Activated naive CD4-positive, alpha-beta T cell treated with anti-CD3 and anti-CD28 coated beads for 36 hours (primary cell): ENCODE measurements at regions of chr12 and their contacts with region 1.

Region 1: GRCh38 chr12:110600254-110600653 is 13.7 kb upstream of the TCTN1 start:
- DNase-seq: no peak
- H3K4me3 Mint-ChIP-seq: no peak overlapping the region
- H3K27ac Mint-ChIP-seq: no peak overlapping the region
- H3K4me1 Mint-ChIP-seq: peaks cover 6% of the 10 kb centered on the region
- H3K27me3 Mint-ChIP-seq: no peaks in the 10 kb centered on the region

Region 2: DNA sequence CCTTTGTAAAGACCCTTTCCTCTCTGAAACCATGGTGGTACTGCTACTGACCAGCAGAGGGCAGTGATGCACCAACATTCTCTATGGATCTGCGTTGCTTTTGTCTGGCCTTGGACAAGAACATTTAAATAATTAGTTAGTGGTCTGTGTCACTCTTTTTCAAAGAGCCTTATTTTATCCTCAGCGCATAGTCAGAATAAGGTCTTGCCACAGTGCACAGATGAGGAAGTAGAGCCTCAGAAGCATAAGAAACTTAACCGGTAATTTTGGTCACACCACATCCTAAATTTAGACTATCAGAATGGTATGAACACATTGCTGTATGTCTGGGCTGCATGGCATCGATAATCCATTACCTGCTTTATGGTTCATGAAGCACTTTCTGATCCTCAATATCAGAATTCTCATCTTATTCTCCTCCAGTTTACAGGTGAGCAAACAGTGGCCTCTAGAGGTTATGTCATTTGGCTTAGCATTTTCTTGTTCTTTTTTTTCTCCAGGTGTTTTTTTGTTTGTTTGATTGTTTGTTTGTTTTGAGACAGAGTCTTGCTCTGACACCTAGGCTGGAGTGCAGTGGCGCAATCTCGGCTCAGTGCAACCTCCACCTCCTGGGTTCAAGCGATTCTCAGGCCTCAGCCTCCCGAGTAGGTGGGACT is 499.8 kb before region 1 on chr12:
- CTCF ChIA-PET with region 1: interaction called, 4 read pairs
- intact Hi-C with region 1: loop called (anchors 2 kb)
- DNase-seq: peak; percentile 77
- H3K4me3 Mint-ChIP-seq: no peak overlapping the region
- H3K27ac Mint-ChIP-seq: no peak overlapping the region
- H3K4me1 Mint-ChIP-seq: peaks cover 6% of the 10 kb centered on the region
- H3K27me3 Mint-ChIP-seq: no peaks in the 10 kb centered on the region

Region 3: GRCh38 chr12:110449799-110450497 is 150.3 kb before region 1 on chr12 and contains the start of gene ARPC3:
- CTCF ChIA-PET with region 1: interaction called, 50 read pairs
- intact Hi-C with region 1: loop called (anchors 1 kb)
- DNase-seq: peak; percentile 98
- H3K4me3 Mint-ChIP-seq: peak within 1 kb of the TSS; percentile 100
- H3K27ac Mint-ChIP-seq: peak within 1 kb of the TSS; percentile 100
- H3K4me1 Mint-ChIP-seq: peaks cover 38% of the 10 kb centered on the region
- H3K27me3 Mint-ChIP-seq: no peaks in the 10 kb centered on the region
- total RNA-seq, gene ARPC3: 279 to 311 TPM

Region 4: DNA sequence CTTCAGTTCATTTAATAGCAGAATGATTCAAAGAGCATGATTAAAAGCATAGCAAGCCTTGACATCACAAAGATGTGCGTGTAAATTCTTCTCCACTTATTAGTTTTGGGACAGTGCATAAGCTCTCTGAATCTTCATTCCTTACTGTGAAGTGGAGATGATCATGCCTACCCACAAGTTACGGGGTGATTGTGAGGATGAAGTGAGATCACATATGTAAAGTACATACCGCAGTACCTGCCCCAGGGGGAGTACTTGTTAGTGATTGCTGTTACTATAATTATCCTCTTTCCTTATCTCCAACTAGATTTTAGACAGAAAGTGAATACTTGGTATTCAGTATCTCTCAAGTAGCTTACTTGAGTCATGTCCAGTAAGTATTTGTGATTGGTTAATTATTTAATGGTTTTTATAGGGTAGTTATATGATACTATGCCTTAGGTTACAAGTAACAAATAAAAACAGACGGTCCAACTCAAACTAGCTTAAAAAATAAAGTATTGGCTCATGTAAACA is 92.1 kb before region 1 on chr12:
- CTCF ChIA-PET with region 1: interaction called, 199 read pairs
- intact Hi-C with region 1: loop called (anchors 1 kb)
- DNase-seq: no peak
- H3K4me3 Mint-ChIP-seq: no peak overlapping the region
- H3K27ac Mint-ChIP-seq: no peak overlapping the region
- H3K4me1 Mint-ChIP-seq: no peaks in the 10 kb centered on the region
- H3K27me3 Mint-ChIP-seq: no peaks in the 10 kb centered on the region

Region 5: DNA sequence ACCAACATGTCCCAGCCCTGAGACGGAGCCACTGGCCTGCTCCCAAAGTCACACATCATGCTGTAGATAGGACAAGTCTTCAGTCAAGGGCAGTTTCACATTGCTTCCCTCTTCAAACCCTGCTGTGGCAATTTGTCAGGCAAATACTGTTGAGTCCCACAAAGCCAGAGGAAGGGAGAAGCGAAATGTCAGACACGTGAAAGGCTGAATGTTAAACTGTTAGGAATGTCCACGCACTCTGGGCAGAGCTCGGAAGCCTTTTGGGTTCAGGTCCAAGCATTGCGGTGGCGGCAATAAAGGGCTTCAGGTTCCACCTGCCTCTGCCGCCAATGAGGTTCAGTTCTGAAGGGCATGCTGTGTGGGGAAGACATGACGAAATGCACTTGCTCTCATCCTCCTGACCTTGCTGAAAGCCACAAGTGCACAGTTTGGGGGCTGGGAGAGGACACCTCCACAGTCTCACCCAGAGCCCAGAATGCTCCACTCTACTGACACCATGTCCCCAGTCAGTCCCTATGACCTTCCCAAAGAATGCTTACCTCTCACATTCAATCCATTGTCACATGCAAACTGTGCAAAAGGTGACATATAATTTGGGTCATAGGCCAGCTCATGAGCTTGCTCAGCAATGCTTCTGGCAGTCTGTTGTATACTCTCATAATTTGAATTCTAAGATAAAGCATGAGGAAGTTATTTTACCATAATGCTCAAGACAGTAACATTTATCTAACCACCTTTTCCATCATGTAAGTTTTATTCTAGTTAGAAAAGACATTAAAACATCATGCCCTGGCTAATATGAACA is 62.4 kb before region 1 on chr12:
- CTCF ChIA-PET with region 1: interaction called, 82 read pairs
- intact Hi-C with region 1: no loop called
- DNase-seq: no peak
- H3K4me3 Mint-ChIP-seq: no peak overlapping the region
- H3K27ac Mint-ChIP-seq: peak overlapping the region; percentile 15
- H3K4me1 Mint-ChIP-seq: peaks cover 29% of the 10 kb centered on the region
- H3K27me3 Mint-ChIP-seq: no peaks in the 10 kb centered on the region

Region 6: DNA sequence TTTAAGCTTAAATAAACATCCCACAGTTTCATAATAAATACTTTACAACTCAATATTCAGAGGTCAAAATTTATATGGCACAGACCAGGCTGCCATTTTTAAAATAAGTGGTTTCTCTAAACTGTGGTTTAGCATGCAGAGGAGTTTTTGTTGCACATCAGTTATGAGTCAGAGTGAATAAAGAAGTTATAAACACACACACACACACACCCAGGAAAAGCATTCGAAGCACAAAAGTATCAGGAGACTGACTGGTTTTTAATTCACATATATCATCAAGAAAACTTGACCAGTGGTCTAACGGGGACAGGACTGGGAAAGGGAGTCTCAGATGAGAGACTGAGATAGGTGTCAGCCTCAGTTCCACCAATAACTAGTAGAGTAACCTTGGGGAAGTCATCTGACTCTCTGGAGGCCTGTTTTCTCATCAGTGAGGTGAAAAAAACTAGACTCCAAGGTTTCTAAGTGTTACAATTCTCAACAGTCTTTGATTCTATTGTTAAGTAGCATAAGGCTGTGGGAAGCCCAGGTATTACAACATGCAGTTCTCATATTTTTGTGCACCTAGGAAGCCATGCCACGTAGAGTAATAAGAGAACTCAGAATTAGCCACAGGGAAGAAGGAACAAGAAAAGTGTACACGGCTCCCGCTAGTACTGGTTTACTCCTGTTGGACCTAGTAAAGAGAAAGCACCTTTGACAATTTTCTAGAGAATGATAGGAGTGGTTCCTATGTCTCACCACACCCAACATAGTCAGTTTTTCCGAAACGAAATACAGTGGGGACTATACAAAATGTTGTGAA is 22.3 kb before region 1 on chr12:
- CTCF ChIA-PET with region 1: interaction called, 20 read pairs
- intact Hi-C with region 1: no loop called
- DNase-seq: peak; percentile 72
- H3K4me3 Mint-ChIP-seq: peak overlapping the region; percentile 58
- H3K27ac Mint-ChIP-seq: peak overlapping the region; percentile 98
- H3K4me1 Mint-ChIP-seq: peaks cover 75% of the 10 kb centered on the region
- H3K27me3 Mint-ChIP-seq: no peaks in the 10 kb centered on the region

Region 7: GRCh38 chr12:110698171-110698902 is 98.1 kb after region 1 on chr12:
- CTCF ChIA-PET with region 1: interaction called, 5 read pairs
- intact Hi-C with region 1: loop called (anchors 1 kb)
- DNase-seq: peak; percentile 90
- H3K4me3 Mint-ChIP-seq: no peak overlapping the region
- H3K27ac Mint-ChIP-seq: peak overlapping the region; percentile 57
- H3K4me1 Mint-ChIP-seq: peaks cover 17% of the 10 kb centered on the region
- H3K27me3 Mint-ChIP-seq: no peaks in the 10 kb centered on the region

Region 8: DNA sequence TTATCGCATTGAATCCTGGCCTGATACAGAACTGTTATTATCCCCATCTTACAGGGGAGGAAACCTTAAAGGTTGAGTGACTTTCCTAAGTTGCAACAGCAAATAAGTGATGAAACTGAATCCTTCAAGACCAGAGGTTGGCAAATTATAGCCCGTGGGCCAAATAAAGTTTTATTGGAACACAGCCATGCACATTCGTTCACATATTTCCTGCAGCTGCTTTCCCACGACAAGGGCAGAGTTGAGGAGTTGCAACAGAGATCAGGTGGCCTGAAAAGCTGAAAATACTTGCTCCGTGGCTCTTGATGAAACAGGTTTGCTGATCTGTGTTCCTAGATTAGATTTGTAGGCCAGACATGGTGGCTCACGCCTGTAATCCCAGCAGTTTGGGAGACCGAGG is 641.9 kb after region 1 on chr12:
- CTCF ChIA-PET with region 1: no interaction called
- intact Hi-C with region 1: no loop called
- DNase-seq: no peak
- H3K4me3 Mint-ChIP-seq: no peak overlapping the region
- H3K27ac Mint-ChIP-seq: no peak overlapping the region
- H3K4me1 Mint-ChIP-seq: no peaks in the 10 kb centered on the region
- H3K27me3 Mint-ChIP-seq: no peaks in the 10 kb centered on the region